ENCODE measurements at regions of chr16 and their contacts with region 1.

Region 1: GRCh38 chr16:84970447-84971127 is 40.7 kb downstream of the ZDHHC7 start:
- DNase-seq: no peak
- H3K4me3 ChIP-seq: no peak overlapping the region
- H3K27me3 ChIP-seq: no peaks in the 10 kb centered on the region
- CTCF ChIP-seq: peak; percentile 87

Region 2: GRCh38 chr16:84738255-84739038 is 232.1 kb before region 1 on chr16:
- CTCF ChIA-PET with region 1: interaction called, 29 read pairs
- POLR2A ChIA-PET with region 1: no interaction called
- DNase-seq: no peak
- H3K4me3 ChIP-seq: no peak overlapping the region
- H3K27me3 ChIP-seq: no peaks in the 10 kb centered on the region
- CTCF ChIP-seq: peak; percentile 87

Region 3: DNA sequence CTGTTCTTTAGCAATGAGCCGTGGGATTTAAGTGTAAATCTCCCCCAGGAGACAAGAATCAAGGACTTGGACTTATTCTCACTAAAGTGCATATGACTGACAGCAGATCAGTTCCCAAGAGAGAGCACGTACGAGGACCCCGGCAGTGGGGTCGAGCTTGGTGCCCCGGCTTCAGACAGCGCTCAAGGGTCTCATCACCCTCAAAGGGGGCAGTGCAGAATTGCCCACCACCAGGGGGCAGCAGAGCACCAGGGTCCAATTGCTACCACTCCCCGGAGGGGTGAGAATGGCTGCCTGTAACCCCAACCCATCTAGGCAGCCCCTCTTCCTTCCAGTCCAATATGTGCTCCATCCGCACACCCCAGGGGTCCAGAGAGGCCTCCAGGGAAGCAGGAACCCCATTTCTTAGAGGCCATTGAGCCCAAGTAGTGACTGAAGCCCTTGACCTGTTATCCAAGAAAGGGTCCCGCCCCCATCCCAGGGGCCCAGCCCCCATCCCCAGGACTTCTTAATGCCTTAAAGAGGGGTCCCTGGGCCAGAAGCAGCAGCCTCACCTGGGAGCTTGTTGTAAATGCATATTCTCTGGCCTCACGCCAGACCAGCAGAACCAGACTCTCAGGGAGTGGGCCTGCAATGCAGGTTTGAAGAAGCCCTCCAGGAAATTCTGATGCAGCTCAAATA is 45.4 kb before region 1 on chr16:
- CTCF ChIA-PET with region 1: interaction called, 82 read pairs
- POLR2A ChIA-PET with region 1: interaction called, 8 read pairs
- DNase-seq: no peak
- H3K4me3 ChIP-seq: no peak overlapping the region
- H3K27me3 ChIP-seq: no peaks in the 10 kb centered on the region
- CTCF ChIP-seq: peak; percentile 92

Region 4: GRCh38 chr16:84952335-84953189 is 18.0 kb before region 1 on chr16:
- CTCF ChIA-PET with region 1: interaction called, 25 read pairs
- POLR2A ChIA-PET with region 1: no interaction called
- DNase-seq: no peak
- H3K4me3 ChIP-seq: no peak overlapping the region
- H3K27me3 ChIP-seq: peaks cover 2% of the 10 kb centered on the region; the same call in 1 of the 2 replicates
- CTCF ChIP-seq: peak; percentile 87

Region 5: DNA sequence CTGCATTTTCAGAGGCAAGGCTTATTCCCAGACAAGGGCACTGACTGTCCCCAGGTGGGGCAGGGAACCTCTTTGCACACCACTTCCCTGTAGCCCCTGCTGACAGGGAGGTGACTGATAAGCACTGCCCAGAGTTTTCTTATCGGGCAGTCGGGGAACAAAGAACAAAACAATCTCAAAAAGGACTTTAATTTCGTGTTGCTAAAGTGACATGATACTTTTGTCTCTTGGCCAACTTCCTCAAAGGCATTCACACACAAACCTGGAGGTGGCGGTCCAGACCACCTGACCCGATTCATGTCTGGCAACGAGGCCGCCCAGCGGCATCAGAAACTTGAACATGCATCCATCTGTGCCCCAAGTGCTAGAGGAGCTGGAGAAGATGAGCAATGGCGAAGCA is 11.8 kb after region 1 on chr16:
- CTCF ChIA-PET with region 1: interaction called, 17 read pairs
- POLR2A ChIA-PET with region 1: no interaction called
- DNase-seq: no peak
- H3K4me3 ChIP-seq: no peak overlapping the region
- H3K27me3 ChIP-seq: no peaks in the 10 kb centered on the region
- CTCF ChIP-seq: no peak

Region 6: GRCh38 chr16:85245307-85246172 is 275.0 kb after region 1 on chr16:
- CTCF ChIA-PET with region 1: no interaction called
- POLR2A ChIA-PET with region 1: no interaction called
- DNase-seq: no peak
- H3K4me3 ChIP-seq: no peak overlapping the region
- H3K27me3 ChIP-seq: no peaks in the 10 kb centered on the region
- CTCF ChIP-seq: peak; percentile 94

Measured in BJ (cell line).